Upper lobe of right lung (tissue), 1 donor: ENCODE measurements at regions of chr15 and their contacts with region 1.

Region 1: DNA sequence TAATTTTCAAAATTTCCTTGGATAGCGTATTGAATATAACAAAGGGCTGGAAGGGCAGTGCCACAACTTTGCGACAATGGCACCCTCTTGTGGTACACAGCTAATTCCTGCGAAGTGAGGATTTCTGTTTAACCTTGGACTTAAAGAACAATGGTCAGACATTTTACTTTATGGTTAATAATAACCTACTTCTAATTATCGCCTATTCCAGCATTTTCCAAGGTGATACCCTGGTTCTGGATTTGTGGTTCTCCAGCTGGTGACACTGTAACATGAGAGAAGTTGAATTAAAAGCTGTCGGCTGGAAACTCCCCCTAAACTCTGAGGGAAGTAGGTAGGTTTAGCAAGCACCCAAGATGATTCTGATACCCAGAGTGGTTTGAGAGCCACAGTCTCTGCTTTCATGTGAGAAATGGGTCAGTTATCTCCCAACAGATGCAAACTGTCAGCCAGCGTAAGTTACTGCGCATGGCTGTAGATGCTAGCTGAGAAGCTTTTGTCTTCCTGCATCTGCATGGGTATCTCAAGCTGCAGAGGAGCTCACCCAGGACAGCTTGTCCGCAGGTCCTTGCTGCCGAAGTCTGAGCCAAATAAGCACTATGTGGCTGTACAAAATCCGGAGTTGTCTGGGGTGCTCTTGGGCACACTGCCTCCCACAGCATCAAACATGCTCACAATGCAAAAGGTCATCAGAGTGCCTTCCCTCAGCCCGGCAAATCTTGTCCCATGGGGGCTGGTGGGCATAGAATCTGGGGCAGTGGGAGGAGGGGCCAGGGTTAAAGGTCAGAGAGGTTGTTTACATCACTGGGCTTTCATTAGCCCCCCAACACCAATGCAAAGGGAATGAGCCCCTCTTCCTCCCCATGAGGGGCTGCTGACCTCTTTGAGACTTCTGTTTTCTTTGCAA is 6.6 kb upstream of the CHSY1 start:
- DNase-seq: no peak
- ATAC-seq: peak; percentile 88
- H3K4me3 ChIP-seq: no peak overlapping the region
- H3K27ac ChIP-seq: no peak overlapping the region
- H3K4me1 ChIP-seq: no peaks in the 10 kb centered on the region
- H3K27me3 ChIP-seq: no peaks in the 10 kb centered on the region
- CTCF ChIP-seq: peak; percentile 86

Region 2: GRCh38 chr15:101017093-101017754 is 241.3 kb before region 1 on chr15:
- intact Hi-C with region 1: loop called (anchors 2 kb)
- DNase-seq: no peak
- ATAC-seq: no peak
- H3K4me3 ChIP-seq: no peak overlapping the region
- H3K27ac ChIP-seq: no peak overlapping the region
- H3K4me1 ChIP-seq: peaks cover 16% of the 10 kb centered on the region
- H3K27me3 ChIP-seq: no peaks in the 10 kb centered on the region
- CTCF ChIP-seq: no peak

Region 3: DNA sequence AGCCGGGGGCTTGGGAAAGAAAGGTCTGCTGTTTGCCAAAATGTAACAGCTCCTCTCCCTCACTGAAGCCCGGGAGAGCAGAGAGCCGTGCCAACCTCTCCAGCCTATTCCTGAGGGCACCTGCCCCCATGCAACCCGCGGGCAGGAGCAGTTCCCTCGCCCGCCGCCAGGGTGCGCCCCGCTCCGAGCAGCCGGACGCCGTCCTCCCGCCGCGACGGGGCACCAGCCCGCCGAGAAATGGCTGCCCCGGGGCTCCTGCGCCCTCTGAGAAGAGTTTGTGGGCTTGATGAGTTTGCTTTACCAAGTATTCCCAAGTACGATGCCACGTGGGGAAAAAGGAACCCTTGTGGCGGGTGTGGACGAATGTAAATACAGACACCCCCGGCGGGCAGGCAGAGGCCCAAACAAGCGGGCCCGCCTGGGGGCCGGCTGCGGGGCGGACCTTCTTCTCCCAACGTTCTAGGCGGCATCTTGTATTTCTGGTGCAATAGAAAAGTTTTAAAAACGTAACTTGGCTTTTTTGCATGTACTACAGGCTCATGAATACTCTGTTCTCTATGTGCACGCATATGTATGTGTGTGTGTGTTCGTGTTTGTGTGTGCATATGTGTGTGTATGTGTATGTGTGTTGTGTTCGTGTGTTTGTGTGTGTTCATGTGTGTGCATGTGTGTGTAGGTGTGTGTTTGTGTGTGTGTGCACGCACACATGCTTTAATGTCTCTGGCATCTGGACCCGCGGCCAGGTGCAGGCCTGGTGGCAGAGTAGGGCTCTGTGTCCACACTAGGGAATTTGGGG is 169.5 kb before region 1 on chr15:
- intact Hi-C with region 1: loop called (anchors 5 kb)
- DNase-seq: peak; percentile 89
- ATAC-seq: peak; percentile 93
- H3K4me3 ChIP-seq: peak overlapping the region; percentile 19
- H3K27ac ChIP-seq: no peak overlapping the region
- H3K4me1 ChIP-seq: peaks cover 40% of the 10 kb centered on the region
- H3K27me3 ChIP-seq: no peaks in the 10 kb centered on the region
- CTCF ChIP-seq: peak; percentile 100